ENCODE measurements at regions of chr17 and their contacts with region 1.

Region 1: DNA sequence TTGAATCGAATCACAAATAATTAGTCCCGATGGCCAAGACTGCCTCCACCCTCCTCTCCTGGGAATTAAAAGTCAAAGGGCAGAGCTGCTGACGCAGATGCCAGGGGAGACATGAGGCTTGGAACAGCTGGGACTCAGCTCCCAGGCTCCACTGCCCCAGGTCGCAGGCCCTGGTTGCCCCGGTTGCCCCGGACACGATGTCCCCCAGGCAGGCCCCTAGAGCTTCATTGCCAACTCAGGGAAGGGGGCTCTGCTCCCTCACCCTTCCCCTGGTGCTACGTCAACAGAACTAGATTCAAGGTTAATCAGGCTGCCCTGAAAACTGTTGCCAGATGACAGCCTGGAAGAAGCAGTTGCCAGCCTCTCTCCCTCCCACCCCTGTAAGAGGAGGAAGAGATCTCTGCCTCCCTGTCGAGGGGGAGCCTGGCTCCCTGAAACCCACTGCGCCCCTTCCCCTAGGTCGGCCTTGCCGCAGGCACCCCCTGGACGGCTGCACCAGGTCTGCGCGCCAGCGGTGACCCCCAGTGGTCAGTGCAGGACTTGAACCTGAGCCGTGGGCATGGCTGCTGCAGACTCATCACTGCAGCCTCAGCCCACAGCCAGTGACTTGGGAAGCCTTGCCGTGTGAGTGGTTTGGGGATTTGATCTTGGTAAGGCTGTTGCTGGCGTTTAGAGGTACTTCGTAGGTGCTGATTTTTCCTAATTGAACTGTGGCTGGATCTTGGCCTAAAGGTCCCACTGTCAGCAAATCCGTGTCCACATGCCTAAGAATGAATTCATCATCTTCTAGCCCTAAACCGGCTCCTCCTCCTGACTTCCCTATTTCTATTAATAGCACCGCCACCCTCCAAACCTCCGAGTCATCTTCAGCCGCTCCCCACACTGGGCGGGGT is 84.1 kb upstream of the TOB1 start:
- DNase-seq: peak; percentile 78 to 93 (median 84)
- ATAC-seq: peak; percentile 65 to 88 (median 80)
- H3K4me3 ChIP-seq: peak overlapping the region in 1 of 4 donors; percentile 17
- H3K27ac ChIP-seq: peak overlapping the region; percentile 89 to 97 (median 92)
- H3K4me1 ChIP-seq: peaks cover 24 to 33% (median 32%) of the 10 kb centered on the region in 3 donors
- H3K27me3 ChIP-seq: no peaks in the 10 kb centered on the region
- CTCF ChIP-seq: peak; percentile 31 to 76 (median 63)

Region 2: GRCh38 chr17:50841949-50842354 is 108.3 kb before region 1 on chr17:
- intact Hi-C with region 1: loop called in 2 of 3 experiments (anchors 5 to 10 kb)
- DNase-seq: peak; percentile 59 to 85 (median 76)
- ATAC-seq: peak; percentile 80 to 94 (median 91)
- H3K4me3 ChIP-seq: no peak overlapping the region
- H3K27ac ChIP-seq: no peak overlapping the region
- H3K4me1 ChIP-seq: no peaks in the 10 kb centered on the region
- H3K27me3 ChIP-seq: no peaks in the 10 kb centered on the region
- CTCF ChIP-seq: peak; percentile 54 to 73 (median 64)

Region 3: DNA sequence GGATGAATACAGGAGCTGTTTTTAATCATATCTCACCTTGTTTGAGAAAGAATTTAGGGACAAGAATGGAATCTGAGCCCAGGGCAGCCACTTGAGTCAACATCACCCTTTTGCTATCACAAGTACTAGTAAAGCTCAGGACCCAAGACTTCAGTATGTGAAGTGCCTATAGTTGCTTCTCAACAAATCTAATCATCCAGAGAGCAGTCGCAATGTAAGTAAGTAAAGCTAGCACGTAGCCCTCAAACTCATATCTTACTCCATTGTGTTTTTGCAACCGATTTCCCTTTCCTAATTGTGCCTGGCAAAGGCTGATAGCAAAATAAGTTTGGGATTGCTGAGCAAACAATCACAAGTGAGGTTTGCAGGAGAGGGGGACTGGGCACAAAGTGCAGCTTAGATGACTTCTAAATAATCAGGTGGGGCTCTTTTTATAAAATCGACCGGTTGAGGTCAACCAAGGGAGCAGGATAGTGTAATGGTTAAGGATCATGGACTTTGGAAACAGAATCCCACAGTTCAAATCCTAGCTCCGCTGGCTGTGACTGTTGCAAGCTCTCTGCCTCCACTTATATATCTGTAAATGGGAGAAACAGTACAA is 97.1 kb before region 1 on chr17:
- intact Hi-C with region 1: loop called (anchors 5 to 10 kb)
- DNase-seq: no peak
- ATAC-seq: peak in 2 of 4 donors; percentile 2 to 6
- H3K4me3 ChIP-seq: no peak overlapping the region
- H3K27ac ChIP-seq: peak overlapping the region in 2 of 4 donors; percentile 1 to 48
- H3K4me1 ChIP-seq: peaks cover 26 to 29% (median 26%) of the 10 kb centered on the region in 3 donors
- H3K27me3 ChIP-seq: no peaks in the 10 kb centered on the region
- CTCF ChIP-seq: no peak

Measured in pancreas (tissue), 10 donors.